A673 (cell line): ENCODE measurements at regions of chr6 and their contacts with region 1.

Region 1: GRCh38 chr6:63272397-63272796 is 47.4 kb downstream of the LGSN start:
- DNase-seq: peak; percentile 60
- H3K4me3 ChIP-seq: no peak overlapping the region
- H3K27ac ChIP-seq: no peak overlapping the region
- H3K4me1 ChIP-seq: peaks cover 13% of the 10 kb centered on the region
- H3K27me3 ChIP-seq: no peaks in the 10 kb centered on the region
- CTCF ChIP-seq: peak; percentile 63

Region 2: GRCh38 chr6:63066055-63066704 is 206.2 kb before region 1 on chr6:
- CTCF ChIA-PET with region 1: no interaction called
- POLR2A ChIA-PET with region 1: no interaction called
- intact Hi-C with region 1: loop called (anchors 2 kb)
- DNase-seq: peak; percentile 17
- H3K4me3 ChIP-seq: no peak overlapping the region
- H3K27ac ChIP-seq: no peak overlapping the region
- H3K4me1 ChIP-seq: no peaks in the 10 kb centered on the region
- H3K27me3 ChIP-seq: no peaks in the 10 kb centered on the region
- CTCF ChIP-seq: 0 out of 2 replicates have a peak, but pooled peaks have one; percentile 21

Region 3: GRCh38 chr6:63197741-63198140 is 74.7 kb before region 1 on chr6:
- CTCF ChIA-PET with region 1: no interaction called
- POLR2A ChIA-PET with region 1: no interaction called
- intact Hi-C with region 1: no loop called
- DNase-seq: no peak
- H3K4me3 ChIP-seq: no peak overlapping the region
- H3K27ac ChIP-seq: no peak overlapping the region
- H3K4me1 ChIP-seq: no peaks in the 10 kb centered on the region
- H3K27me3 ChIP-seq: peaks cover 5% of the 10 kb centered on the region
- CTCF ChIP-seq: no peak